HepG2 (cell line): ENCODE measurements at regions of chr12 and their contacts with region 1.

Region 1: DNA sequence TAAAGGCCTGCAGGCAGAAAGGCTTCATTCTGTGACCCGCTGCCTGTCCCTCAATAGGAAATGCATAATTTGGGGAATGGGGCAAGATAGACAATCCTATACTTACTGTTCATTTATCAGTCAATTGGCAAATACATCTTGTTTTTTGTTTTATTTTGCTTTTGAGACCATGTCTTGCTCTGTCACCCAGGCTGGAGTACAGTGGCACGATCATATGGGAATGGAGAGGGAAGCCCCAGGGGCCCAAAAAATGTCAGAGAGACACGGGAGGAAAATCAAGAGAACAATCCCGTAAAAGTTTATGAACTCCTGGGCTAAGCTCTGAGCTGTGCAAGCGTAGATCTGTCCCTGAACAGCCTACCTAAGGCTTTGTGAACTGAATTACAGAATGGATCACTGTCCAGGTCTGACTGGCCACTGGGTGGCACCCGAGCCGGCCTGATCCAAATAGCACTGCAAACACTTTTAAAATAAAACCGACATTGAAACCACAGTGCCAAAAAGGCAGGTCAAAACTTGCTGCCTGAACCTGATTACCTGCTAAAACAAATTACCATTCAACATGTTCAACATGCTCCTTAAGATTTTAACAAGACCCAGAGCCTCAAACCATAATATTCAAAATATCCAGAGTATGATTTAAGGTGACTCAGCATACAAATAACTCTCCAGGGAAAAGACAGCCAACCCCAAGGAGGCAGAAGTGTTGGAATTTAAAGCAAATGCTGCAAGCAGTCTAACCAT is 11.8 kb downstream of the COPS7A start:
- DNase-seq: peak; percentile 46
- ATAC-seq: peak; percentile 99
- H3K4me3 ChIP-seq: no peak overlapping the region
- H3K27ac ChIP-seq: peak overlapping the region; percentile 3
- H3K4me1 ChIP-seq: peaks cover 11% of the 10 kb centered on the region
- H3K27me3 ChIP-seq: no peaks in the 10 kb centered on the region
- CTCF ChIP-seq: peak; percentile 84
- EP300 ChIP-seq: no peak
- POLR2A ChIP-seq: no peak
- RAD21 ChIP-seq: peak; percentile 78

Region 2: GRCh38 chr12:6592087-6592486 is 143.5 kb before region 1 on chr12:
- CTCF ChIA-PET with region 1: no interaction called
- POLR2A ChIA-PET with region 1: no interaction called
- in situ Hi-C with region 1: no loop called
- intact Hi-C with region 1: no loop called
- DNase-seq: no peak
- ATAC-seq: no peak
- H3K4me3 ChIP-seq: no peak overlapping the region
- H3K27ac ChIP-seq: no peak overlapping the region
- H3K4me1 ChIP-seq: no peaks in the 10 kb centered on the region; the same call in 1 of the 2 replicates
- H3K27me3 ChIP-seq: no peaks in the 10 kb centered on the region
- CTCF ChIP-seq: no peak
- EP300 ChIP-seq: no peak
- POLR2A ChIP-seq: no peak
- RAD21 ChIP-seq: no peak

Region 3: DNA sequence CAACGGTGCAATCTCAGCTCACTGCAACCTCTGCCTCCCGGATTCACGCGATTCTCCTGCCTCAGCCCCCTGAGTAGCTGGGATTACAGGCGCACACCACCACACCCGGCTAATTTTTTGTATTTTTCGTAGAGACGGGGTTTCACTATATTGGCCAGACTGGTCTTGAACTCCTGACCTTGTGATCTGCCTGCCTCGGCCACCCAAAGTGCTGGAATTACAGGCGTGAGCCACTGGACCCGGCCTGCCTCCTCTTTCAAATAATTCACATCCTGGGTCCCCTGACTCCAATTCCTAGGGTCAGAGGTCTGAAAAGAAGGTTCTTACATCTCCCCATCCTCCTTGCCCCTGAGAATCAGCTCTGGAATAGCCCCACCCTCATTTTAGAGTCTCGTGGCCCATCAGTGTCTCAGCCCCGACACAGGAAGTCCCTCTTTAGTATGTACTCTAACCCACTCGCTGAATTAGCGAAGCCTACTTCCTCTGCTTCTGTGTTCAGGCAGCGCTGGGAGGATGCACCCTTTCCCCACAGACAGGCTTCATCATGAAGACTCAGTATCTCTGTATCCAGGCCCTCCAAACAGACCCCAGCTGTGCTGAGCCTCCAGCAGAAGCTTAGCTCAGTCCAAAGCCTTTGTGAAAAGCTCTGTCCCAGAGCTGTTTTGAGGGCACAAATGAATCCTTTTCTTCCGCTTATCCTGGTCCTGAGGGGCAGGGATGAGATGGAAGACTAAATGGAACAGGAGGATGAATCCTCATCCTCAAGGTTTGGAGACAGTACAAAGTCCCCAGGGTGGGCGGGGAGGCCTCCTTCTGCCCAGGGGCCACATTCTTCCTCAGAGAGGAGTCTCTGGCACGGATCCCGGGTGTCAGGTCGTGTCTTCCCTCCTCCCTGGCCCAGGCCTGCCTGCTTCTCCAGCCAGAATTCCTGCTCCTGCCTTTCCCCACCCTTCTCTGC is 103.3 kb before region 1 on chr12:
- CTCF ChIA-PET with region 1: no interaction called
- POLR2A ChIA-PET with region 1: no interaction called
- in situ Hi-C with region 1: no loop called
- intact Hi-C with region 1: no loop called
- DNase-seq: no peak
- ATAC-seq: peak; percentile 39
- H3K4me3 ChIP-seq: peak overlapping the region in 1 of 3 experiments; percentile 49; a peak in 2 of 6 replicates
- H3K27ac ChIP-seq: no peak overlapping the region
- H3K4me1 ChIP-seq: peaks cover 46% of the 10 kb centered on the region
- H3K27me3 ChIP-seq: peaks cover 0 to 7% of the 10 kb centered on the region in 2 experiments; a peak in 2 of 5 replicates
- CTCF ChIP-seq: no peak
- EP300 ChIP-seq: no peak
- POLR2A ChIP-seq: no peak
- RAD21 ChIP-seq: no peak

Region 4: DNA sequence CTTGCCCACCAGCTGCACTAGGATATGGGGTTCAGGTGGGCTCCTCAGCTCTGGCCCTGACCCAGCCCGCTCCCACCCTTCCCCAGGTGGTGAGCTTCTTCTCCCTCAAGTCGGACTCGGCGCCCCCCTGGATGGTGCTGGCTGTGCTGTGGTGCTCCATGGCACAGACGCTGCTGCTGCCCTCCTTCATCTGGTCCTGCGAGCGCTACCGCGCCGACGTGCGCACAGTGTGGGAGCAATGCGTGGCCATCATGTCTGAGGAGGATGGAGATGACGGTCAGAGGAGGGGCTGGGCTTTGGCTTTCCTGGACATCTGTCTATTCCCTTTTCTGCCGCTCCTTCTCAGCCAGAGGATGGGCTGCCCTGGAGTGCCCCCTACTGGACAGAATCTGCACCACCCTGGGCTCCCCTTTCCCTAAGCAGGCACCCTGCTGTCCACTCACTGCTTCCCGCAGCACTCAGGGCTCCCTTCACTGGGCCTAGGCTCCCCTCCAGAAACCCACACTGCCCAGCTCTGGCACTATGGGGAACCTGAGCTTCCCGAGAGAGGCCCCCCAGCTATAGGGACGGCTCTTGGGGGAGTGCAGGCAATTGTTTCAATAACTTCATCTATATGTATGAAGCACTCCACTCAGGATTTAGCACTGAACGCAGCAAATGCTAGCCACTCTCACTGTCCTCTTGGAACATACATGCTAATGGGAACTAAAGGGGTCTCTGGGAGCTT is 89.9 kb after region 1 on chr12:
- CTCF ChIA-PET with region 1: interaction called, 24 read pairs
- POLR2A ChIA-PET with region 1: no interaction called
- in situ Hi-C with region 1: no loop called
- intact Hi-C with region 1: loop called (anchors 1 kb)
- DNase-seq: peak; percentile 67
- ATAC-seq: peak; percentile 65
- H3K4me3 ChIP-seq: no peak overlapping the region
- H3K27ac ChIP-seq: no peak overlapping the region
- H3K4me1 ChIP-seq: peaks cover 34% of the 10 kb centered on the region
- H3K27me3 ChIP-seq: peaks cover 2 to 6% of the 10 kb centered on the region in 2 experiments; a peak in 3 of 5 replicates
- CTCF ChIP-seq: peak; percentile 95
- EP300 ChIP-seq: no peak
- POLR2A ChIP-seq: no peak
- RAD21 ChIP-seq: peak; percentile 85